ENCODE measurements at regions of chr14 and their contacts with region 1.

Region 1: GRCh38 chr14:105589161-105590062 is 63.0 kb downstream of the TMEM121 start:
- DNase-seq: peak; percentile 36 to 66
- ATAC-seq: peak; percentile 37
- H3K4me3 ChIP-seq: no peak overlapping the region
- H3K27ac ChIP-seq: no peak overlapping the region
- H3K4me1 ChIP-seq: no peaks in the 10 kb centered on the region
- H3K27me3 ChIP-seq: no peaks in the 10 kb centered on the region

Region 2: GRCh38 chr14:105709281-105710118 is 120.1 kb after region 1 on chr14:
- intact Hi-C with region 1: loop called in 1 of 2 experiments (anchors 5 kb)
- DNase-seq: no peak
- ATAC-seq: no peak
- H3K4me3 ChIP-seq: no peak overlapping the region
- H3K27ac ChIP-seq: no peak overlapping the region
- H3K4me1 ChIP-seq: no peaks in the 10 kb centered on the region
- H3K27me3 ChIP-seq: no peaks in the 10 kb centered on the region

Region 3: DNA sequence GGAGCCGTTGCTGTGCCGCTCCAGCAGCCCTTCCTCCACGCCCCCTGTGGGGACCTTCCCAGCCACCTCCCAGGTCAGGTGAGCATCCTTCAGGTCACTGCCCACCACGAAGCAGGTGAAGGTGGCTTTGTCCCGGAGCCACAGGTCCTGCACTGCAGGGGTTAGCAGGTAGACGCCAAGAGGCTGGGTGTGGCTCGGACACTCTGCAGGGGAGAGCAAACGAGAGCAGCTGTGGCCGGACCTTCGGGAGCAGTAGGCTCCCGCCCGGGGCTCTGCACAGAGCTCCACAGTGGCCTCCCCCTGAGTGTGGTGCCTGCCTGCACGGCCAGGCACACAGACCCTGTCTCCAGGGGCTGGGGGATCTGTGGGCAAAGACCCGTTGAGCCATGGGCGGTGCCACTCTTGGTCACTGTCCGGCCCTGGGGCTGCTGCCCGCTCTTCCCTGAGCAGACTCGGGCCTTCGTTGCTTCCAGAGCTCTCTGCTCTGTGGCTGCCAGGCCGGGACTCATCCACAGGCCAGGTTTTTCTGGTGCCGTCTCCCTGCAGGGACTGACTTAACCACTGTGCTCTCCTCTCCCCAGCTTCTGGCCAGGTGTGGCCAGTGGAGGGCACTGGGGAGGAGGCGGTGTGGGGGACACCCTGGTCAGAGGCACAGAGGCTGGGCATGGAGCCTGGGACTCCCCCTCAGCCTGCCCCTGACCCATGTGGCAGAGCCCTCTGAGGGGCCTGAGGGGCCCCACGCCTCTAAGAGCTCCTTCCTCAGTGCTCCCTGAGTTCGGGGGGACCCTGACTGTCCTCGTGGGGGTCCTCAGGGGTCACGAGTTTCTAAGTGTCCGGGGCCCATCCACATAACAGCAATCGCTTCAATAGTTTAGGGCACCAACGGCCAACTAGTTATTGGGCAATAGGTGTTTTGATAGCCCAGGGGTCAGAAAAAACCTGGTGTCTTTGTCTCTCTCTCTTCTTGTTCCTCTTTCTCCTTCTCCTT is 251.9 kb after region 1 on chr14:
- intact Hi-C with region 1: no loop called
- DNase-seq: peak in 1 of 2 donors; percentile 68
- ATAC-seq: no peak
- H3K4me3 ChIP-seq: no peak overlapping the region
- H3K27ac ChIP-seq: no peak overlapping the region
- H3K4me1 ChIP-seq: no peaks in the 10 kb centered on the region
- H3K27me3 ChIP-seq: no peaks in the 10 kb centered on the region

Measured in aorta (tissue), 5 donors.